Ovary (tissue), 10 donors: ENCODE measurements at regions of chr4 and their contacts with region 1.

Region 1: DNA sequence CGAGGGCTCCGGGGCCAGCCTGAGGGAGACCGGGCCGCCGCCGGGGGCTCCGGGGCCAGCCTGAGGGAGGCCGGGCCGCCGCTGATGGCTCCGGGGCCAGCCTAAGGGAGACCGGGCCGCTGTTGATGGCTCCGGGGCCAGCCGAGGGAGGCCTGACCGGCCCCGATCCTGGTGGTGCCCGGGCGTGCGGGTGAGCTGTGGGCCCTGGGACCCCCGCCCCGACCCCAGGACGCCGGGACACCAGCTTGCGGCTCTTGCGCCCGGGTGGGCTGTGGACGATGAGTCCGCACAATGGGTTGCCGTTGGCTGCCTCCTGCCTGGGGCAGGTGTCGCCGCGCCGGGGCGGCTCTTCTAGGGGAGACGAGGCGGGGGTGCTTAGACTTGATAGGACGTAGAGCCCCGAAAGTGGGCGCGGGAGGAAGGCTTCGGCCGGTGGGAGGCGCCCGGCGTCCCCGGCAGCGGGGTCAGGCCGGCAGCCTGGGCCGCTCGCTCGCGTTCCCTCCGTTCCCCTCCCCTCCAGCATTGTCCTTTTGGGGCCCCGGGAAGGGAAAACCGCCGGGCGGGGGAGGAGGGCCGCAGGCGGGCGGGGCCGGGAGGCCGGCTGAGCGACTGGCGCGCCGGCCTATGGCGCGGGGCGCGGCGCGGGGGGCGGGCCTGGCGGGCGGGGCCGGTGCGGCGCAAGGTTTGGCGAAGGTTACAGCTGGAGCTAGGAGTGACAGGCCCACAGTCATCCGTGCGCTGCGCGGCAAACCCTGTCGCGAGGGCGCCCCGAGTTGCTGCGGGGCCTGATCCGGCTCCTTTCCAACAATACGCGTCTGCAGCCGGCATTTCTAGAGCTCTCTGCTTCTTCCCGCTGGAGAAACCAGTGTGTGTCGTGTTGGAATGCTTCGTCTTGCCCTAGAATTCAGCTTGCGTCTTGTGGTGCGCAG is 790 bp downstream of the KIAA0232 start:
- DNase-seq: peak; percentile 93 to 95 (median 94)
- H3K4me3 ChIP-seq: peak overlapping the region; percentile 99
- H3K27ac ChIP-seq: peak overlapping the region; percentile 99
- H3K4me1 ChIP-seq: no peaks in the 10 kb centered on the region
- H3K27me3 ChIP-seq: no peaks in the 10 kb centered on the region
- CTCF ChIP-seq: no peak
- EP300 ChIP-seq: no peak
- POLR2A ChIP-seq: peak; percentile 83

Region 2: GRCh38 chr4:6269616-6270511 is 513.5 kb before region 1 on chr4 and contains the start of gene WFS1:
- intact Hi-C with region 1: loop called in 1 of 4 experiments (anchors 10 kb)
- DNase-seq: peak; percentile 99 to 100 (median 99)
- H3K4me3 ChIP-seq: peak within 1 kb of the TSS; percentile 96
- H3K27ac ChIP-seq: peak within 1 kb of the TSS; percentile 71 to 82
- H3K4me1 ChIP-seq: peaks cover 34% of the 10 kb centered on the region
- H3K27me3 ChIP-seq: no peaks in the 10 kb centered on the region
- CTCF ChIP-seq: no peak
- EP300 ChIP-seq: no peak
- POLR2A ChIP-seq: peak; percentile 76
- total RNA-seq, gene WFS1: 57.4 to 174 (median 140) TPM

Region 3: GRCh38 chr4:6873792-6874461 is 90.6 kb after region 1 on chr4:
- intact Hi-C with region 1: loop called in 3 of 4 experiments (anchors 5 to 10 kb)
- DNase-seq: peak; percentile 62 to 82 (median 74)
- H3K4me3 ChIP-seq: no peak overlapping the region
- H3K27ac ChIP-seq: no peak overlapping the region
- H3K4me1 ChIP-seq: no peaks in the 10 kb centered on the region
- H3K27me3 ChIP-seq: no peaks in the 10 kb centered on the region
- CTCF ChIP-seq: peak; percentile 48 to 69 (median 61)
- EP300 ChIP-seq: no peak
- POLR2A ChIP-seq: no peak